ENCODE measurements at regions of chr17 and their contacts with region 1.

Region 1: DNA sequence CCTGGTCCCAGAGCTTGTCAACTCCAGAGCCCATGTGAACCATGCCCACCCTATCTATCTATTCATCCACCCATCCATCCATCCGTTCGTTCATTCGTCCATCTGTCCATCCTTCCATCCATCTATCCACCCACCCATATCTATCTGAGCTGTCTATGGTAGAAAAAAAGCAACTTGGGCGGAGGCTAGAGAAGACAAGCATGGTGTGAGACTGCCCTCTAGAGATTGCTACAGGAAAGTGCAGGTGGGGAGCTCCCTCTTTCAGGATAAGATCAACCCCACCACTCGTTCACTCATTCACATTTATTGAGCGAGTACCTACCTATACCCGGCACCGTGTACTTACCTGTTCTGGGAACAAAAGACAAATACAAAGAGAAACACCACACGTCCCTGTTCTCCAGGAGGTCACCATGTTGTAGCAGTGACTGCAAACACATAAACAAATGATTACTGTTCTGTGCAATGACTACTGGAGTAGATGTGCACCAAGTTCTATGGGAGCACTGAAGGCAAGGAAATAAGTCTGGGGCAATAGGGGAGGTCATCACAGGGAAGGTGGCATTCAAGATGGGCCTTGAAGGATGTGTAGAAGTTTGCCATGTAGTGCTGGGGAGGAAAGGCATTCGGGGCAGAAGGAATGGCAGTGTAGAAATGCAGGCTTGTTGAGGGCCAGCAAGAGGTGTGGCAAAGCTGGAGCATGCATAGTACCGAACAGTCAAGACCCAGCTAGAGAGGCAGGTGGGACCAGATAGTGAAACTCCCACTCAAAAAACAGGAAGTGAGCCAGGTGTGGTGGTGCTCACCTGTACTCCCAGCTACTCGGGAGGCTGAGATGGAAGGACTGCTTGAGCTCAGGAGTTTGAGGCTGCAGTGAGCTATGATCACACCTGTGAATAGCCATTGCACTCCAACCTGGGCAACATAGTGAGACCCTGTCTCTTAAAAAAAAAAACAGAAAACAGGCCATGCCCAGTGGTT is 13.4 kb upstream of the ATP5MC1 start:
- DNase-seq: no peak
- H3K4me3 ChIP-seq: no peak overlapping the region
- H3K27me3 ChIP-seq: no peaks in the 10 kb centered on the region
- CTCF ChIP-seq: peak; percentile 95

Region 2: DNA sequence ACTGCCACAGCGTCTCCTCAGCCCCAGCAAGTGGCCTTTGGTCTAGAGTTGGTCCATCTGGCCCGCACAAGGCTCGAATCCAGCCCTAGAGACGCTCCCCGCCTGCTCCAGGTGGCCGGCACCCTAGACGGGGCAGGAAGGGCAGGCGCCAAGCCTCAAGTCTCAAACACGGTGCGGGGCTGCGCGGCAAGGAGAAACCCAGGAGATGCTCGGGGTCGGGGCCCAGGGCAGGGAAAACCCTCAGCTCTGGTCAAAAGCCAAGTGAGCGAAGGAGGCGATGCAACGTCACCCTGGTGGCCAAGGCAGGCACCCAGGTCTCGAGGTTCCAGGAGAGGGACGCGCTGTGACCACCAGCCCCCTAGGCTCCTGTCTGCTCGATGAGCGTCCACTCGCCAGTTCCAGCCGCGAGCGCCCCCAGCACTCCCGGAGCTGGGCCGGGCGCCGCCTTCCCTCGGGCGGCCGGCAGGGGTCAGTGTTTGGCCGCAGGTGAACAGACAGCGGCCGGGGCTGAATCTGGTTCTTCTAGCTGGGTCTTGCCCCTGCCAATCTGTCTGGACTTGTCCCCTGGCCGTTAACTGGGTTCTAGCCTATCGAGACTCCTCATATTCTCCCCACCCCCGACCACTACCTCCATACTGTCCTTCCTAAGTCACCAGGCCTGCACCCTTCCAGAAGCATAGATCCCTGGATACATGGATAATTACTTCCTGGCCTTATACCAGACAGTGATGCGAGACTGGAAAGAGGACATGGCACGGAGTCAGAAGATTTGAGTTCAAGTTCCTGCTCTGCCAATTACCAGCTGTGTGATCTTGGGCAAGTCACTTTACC is 200.9 kb before region 1 on chr17:
- CTCF ChIA-PET with region 1: interaction called, 87 read pairs
- POLR2A ChIA-PET with region 1: interaction called, 12 read pairs
- DNase-seq: no peak
- H3K4me3 ChIP-seq: peak overlapping the region; percentile 16; the same call in 1 of the 2 replicates
- H3K27me3 ChIP-seq: peaks cover 9% of the 10 kb centered on the region
- CTCF ChIP-seq: peak; percentile 96

Region 3: DNA sequence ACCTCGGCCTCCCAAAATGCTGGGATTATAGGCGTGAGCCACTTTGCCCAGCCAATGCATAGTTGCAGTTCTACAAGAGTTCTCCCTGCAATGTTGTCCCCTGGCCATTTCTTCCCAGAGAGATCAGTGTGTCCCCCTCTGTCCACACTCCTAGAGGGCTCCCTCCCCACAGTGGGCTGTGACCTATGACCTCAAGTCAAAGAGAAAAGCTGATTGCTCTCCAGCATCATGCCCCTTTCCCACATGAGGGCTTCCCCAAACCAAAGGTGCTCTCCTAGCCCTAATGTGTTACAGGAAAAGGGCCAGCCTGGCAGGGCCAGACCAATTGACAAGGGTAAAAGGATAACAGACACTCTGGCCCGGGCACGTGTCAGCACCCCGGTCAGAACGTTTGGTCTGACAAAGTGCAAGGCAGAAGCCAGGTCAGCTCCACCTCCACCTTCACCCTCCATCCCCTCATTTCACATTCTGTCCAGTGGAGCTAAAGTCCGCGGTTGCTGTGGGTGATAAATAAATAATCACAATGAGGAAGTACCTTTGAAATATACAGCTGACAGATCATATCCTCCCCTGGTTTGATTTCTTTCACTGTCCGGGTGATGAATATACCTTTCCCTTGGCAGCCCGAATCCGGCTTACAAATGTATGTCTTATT is 80.0 kb before region 1 on chr17:
- CTCF ChIA-PET with region 1: interaction called, 719 read pairs
- POLR2A ChIA-PET with region 1: no interaction called
- DNase-seq: no peak
- H3K4me3 ChIP-seq: no peak overlapping the region
- H3K27me3 ChIP-seq: peaks cover 4% of the 10 kb centered on the region
- CTCF ChIP-seq: no peak

Region 4: DNA sequence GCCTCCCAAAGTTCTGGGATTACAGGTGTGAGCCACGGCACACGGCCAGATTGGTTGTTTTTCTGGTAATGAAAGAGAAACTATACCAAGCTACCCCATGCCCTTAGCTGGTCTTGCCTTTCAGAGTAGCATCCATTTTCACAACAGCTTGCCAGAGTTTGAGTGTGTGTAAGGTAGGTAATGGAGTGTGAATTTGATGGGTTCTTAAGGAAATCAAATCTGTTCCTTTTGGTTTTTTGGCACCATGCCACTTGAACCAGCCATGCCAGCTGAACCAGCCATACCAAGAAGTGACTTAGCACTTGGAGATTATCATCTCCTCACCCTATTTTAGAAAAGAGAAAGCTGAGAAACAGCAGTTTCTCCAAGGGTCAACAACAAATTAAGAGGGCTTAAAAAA is 43.2 kb before region 1 on chr17:
- CTCF ChIA-PET with region 1: interaction called, 17 read pairs
- POLR2A ChIA-PET with region 1: no interaction called
- DNase-seq: no peak
- H3K4me3 ChIP-seq: no peak overlapping the region
- H3K27me3 ChIP-seq: no peaks in the 10 kb centered on the region
- CTCF ChIP-seq: no peak

Region 5: GRCh38 chr17:48860456-48860855 is 18.8 kb before region 1 on chr17:
- CTCF ChIA-PET with region 1: interaction called, 30 read pairs
- POLR2A ChIA-PET with region 1: no interaction called
- DNase-seq: no peak
- H3K4me3 ChIP-seq: no peak overlapping the region
- H3K27me3 ChIP-seq: no peaks in the 10 kb centered on the region
- CTCF ChIP-seq: no peak

Region 6: DNA sequence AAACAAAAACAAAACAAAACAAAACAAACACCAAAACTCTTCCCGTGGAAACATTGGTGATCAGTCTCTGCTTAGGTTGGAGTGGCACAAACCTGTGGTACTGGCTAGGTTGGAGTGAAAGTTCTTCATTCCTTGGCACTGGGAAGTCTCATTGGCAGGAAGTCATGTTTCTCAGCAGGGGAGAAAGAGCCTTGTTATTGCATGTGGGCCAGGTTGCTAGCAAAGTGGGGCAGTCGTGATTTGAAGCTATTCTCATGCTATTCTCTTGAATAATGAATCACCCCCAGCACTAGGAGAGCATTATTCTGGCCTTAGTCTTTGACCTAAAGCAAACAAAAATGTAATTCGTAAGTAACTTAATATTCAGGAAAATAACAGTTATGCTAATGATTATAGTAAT is 229.1 kb after region 1 on chr17:
- CTCF ChIA-PET with region 1: no interaction called
- POLR2A ChIA-PET with region 1: no interaction called
- DNase-seq: peak; percentile 41
- H3K4me3 ChIP-seq: no peak overlapping the region
- H3K27me3 ChIP-seq: no peaks in the 10 kb centered on the region
- CTCF ChIP-seq: no peak

Region 7: DNA sequence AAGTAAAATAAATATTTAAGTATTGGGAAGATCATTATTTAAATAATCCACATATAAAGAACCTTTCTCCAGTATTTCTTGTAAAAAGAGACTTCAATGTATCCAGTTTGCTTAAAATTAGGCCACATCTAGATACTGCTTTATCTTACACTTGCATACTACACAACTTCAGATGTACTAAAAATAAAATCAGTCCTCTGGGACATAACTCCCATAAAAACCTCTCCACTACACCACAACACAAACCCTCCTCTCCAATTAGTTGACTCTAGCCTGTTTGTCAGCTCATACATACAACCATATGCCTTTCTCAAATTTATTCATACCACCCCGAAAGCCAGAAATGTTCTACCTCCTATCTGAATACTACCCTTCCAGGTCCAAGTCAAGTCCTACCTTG is 777.0 kb after region 1 on chr17:
- CTCF ChIA-PET with region 1: no interaction called
- POLR2A ChIA-PET with region 1: no interaction called
- DNase-seq: no peak
- H3K4me3 ChIP-seq: no peak overlapping the region
- H3K27me3 ChIP-seq: no peaks in the 10 kb centered on the region
- CTCF ChIP-seq: no peak